GM12878 (cell line): ENCODE measurements at regions of chr3 and their contacts with region 1.

Region 1: DNA sequence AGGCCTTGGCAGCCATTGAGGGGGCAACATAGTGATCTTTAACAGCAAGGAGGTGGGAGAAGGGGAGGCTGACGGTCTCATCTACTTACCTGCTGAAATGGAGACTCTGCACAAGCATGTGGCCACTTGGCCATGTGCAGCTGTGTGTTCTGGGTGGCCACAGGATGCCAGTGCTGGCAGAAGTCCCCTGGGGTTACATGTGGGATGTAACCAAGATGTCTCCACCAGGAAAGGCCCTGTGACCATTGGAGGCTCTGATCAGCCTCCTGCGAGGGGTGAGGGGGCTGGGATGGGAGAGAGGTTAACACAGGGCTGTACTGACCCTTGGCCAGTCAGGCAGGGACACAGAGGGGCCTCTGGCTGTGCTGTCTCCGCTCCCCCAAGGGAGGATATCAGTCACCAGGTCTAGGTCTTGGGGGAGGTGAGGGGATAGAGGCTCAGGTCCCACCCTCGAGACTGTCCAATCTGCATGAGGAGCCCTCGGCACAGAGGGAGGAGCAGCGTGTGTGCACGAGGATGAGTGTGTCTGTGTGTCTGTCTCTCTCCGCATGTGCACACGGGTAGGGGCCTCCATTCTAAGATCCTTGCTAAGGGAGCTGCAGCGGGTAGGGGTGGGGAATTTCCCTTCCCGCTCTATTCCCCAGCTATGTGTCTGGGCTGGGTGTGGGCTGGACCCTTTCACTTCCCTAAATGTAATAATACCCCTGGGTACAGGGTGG is 19.5 kb downstream of the PRKCD start:
- DNase-seq: peak; percentile 84
- ATAC-seq: peak; percentile 97
- H3K4me3 ChIP-seq: peak overlapping the region; percentile 19; the same call in 1 of the 2 replicates
- H3K27ac ChIP-seq: peak overlapping the region; percentile 93
- H3K4me1 ChIP-seq: peaks cover 47% of the 10 kb centered on the region
- H3K27me3 ChIP-seq: no peaks in the 10 kb centered on the region
- CTCF ChIP-seq: no peak
- EP300 ChIP-seq: peak; percentile 56 to 88; a peak in 2 of 4 replicates
- POLR2A ChIP-seq: peak; percentile 63
- RAD21 ChIP-seq: no peak

Region 2: DNA sequence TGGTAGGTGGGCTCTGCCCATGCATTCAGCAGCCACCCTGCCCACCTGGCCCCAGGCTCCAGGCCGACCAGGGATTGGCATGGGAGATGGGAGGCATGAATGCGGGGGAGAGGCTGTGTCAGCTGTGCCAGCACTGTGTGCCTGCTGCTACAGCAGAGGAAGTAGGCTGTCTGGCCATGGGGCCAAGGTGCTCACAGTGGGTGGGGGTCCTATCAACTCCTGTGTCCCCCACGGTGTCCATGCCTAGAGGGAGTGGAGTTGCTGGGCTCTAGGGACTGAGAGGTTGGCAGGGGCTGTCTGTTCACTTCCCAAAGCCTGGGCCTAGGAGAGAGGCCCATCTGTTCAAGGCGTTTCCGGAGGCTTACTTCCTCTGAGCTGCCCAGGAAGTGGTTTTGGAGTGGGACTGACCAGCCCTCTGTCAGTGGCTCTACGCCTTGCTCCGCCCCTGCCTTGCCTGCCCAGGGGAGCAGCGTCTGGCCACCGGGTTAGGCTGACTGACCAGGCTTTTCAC is 13.6 kb before region 1 on chr3:
- CTCF ChIA-PET with region 1: interaction called, 8 read pairs
- POLR2A ChIA-PET with region 1: interaction called, 22 read pairs
- RAD21 ChIA-PET with region 1: interaction called, 29 read pairs
- SMC1A ChIA-PET with region 1: interaction called, 21 read pairs
- in situ Hi-C with region 1: no loop called
- intact Hi-C with region 1: loop called (anchors 1 kb)
- DNase-seq: no peak
- ATAC-seq: peak; percentile 19
- H3K4me3 ChIP-seq: peak overlapping the region; percentile 68
- H3K27ac ChIP-seq: peak overlapping the region; percentile 81
- H3K4me1 ChIP-seq: peaks cover 84% of the 10 kb centered on the region
- H3K27me3 ChIP-seq: no peaks in the 10 kb centered on the region
- CTCF ChIP-seq: no peak
- EP300 ChIP-seq: no peak
- POLR2A ChIP-seq: peak; percentile 11; the same call in 1 of the 2 replicates
- RAD21 ChIP-seq: no peak